Posterior cingulate gyrus (tissue), 11 donors: ENCODE measurements at regions of chr3 and their contacts with region 1.

Region 1: GRCh38 chr3:63818281-63819150 is 583 bp upstream of the C3orf49 start:
- DNase-seq: peak in 5 of 10 donors; percentile 36 to 78 (median 67)

Region 2: GRCh38 chr3:63349583-63350521 is 468.7 kb before region 1 on chr3:
- intact Hi-C with region 1: loop called (anchors 1 kb)
- DNase-seq: peak in 6 of 10 donors; percentile 24 to 88 (median 50)